T-cell (primary cell): ENCODE measurements at regions of chr9 and their contacts with region 1.

Region 1: GRCh38 chr9:33125871-33126822 is 41.0 kb downstream of the B4GALT1 start:
- DNase-seq: peak in 1 of 35 experiments; percentile 24
- ATAC-seq: no peak
- H3K4me3 ChIP-seq: no peak overlapping the region
- H3K4me3 Mint-ChIP-seq: no peak overlapping the region
- H3K27ac ChIP-seq: peak overlapping the region; percentile 16
- H3K27ac Mint-ChIP-seq: peak overlapping the region in 1 of 2 donors; percentile 47
- H3K4me1 ChIP-seq: peaks cover 0 to 45% of the 10 kb centered on the region in 2 experiments
- H3K4me1 Mint-ChIP-seq: peaks cover 36 to 69% (median 49%) of the 10 kb centered on the region in 3 donors
- H3K27me3 ChIP-seq: no peaks in the 10 kb centered on the region
- H3K27me3 Mint-ChIP-seq: no peaks in the 10 kb centered on the region

Region 2: GRCh38 chr9:33007755-33008154 is 118.4 kb before region 1 on chr9:
- CTCF ChIA-PET with region 1: no interaction called
- POLR2A ChIA-PET with region 1: no interaction called
- DNase-seq: no peak
- ATAC-seq: no peak
- H3K4me3 ChIP-seq: no peak overlapping the region
- H3K4me3 Mint-ChIP-seq: no peak overlapping the region
- H3K27ac ChIP-seq: no peak overlapping the region
- H3K27ac Mint-ChIP-seq: no peak overlapping the region
- H3K4me1 ChIP-seq: no peaks in the 10 kb centered on the region
- H3K4me1 Mint-ChIP-seq: peaks cover 0 to under 1% (median 0%) of the 10 kb centered on the region in 3 donors
- H3K27me3 ChIP-seq: no peaks in the 10 kb centered on the region
- H3K27me3 Mint-ChIP-seq: no peaks in the 10 kb centered on the region

Region 3: GRCh38 chr9:33109089-33109875 is 16.9 kb before region 1 on chr9:
- CTCF ChIA-PET with region 1: interaction called in 1 of 2 experiments, 5 read pairs
- POLR2A ChIA-PET with region 1: interaction called in 1 of 2 experiments, 13 read pairs
- DNase-seq: no peak
- ATAC-seq: no peak
- H3K4me3 ChIP-seq: no peak overlapping the region
- H3K4me3 Mint-ChIP-seq: no peak overlapping the region
- H3K27ac ChIP-seq: no peak overlapping the region
- H3K27ac Mint-ChIP-seq: peak overlapping the region; percentile 5 to 21
- H3K4me1 ChIP-seq: peaks cover 0 to 5% of the 10 kb centered on the region in 2 experiments
- H3K4me1 Mint-ChIP-seq: peaks cover 0 to 15% (median 9%) of the 10 kb centered on the region in 3 donors
- H3K27me3 ChIP-seq: no peaks in the 10 kb centered on the region
- H3K27me3 Mint-ChIP-seq: no peaks in the 10 kb centered on the region

Region 4: GRCh38 chr9:33159760-33160127 is 33.6 kb after region 1 on chr9:
- CTCF ChIA-PET with region 1: no interaction called
- POLR2A ChIA-PET with region 1: interaction called in 1 of 2 experiments, 11 read pairs
- DNase-seq: peak in 34 of 35 experiments; percentile 27 to 83 (median 68)
- ATAC-seq: peak; percentile 44 to 77 (median 49)
- H3K4me3 ChIP-seq: peak overlapping the region; percentile 28 to 42
- H3K4me3 Mint-ChIP-seq: peak overlapping the region; percentile 63 to 96 (median 76)
- H3K27ac ChIP-seq: peak overlapping the region; percentile 97
- H3K27ac Mint-ChIP-seq: peak overlapping the region; percentile 94 to 96
- H3K4me1 ChIP-seq: peaks cover 61 to 88% of the 10 kb centered on the region in 2 experiments
- H3K4me1 Mint-ChIP-seq: peaks cover 92 to 97% (median 93%) of the 10 kb centered on the region in 3 donors
- H3K27me3 ChIP-seq: no peaks in the 10 kb centered on the region
- H3K27me3 Mint-ChIP-seq: no peaks in the 10 kb centered on the region

Region 5: DNA sequence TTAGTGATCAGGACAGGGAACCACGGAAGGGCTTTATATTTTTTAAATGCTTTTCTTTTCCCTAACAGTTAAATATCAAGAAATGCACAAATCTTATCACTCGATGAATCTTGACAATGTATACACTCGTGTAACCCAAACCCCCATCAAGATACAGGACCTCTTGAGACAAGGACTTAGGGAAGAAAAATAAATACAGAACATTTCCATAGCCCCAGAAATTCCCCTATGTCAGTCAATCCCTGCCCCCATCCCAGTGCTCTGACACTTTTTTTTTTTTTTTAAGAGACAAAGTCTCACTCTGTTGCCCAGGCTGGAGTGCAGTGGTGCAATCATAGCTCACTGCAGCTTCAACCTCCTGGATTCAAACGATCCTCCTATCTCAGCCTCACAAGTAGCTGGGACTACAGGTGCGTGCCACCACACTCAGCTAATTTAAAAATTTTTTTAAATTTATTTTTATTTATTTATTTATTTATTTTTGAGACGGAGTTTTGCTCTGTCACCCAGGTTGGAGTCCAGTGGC is 116.5 kb after region 1 on chr9:
- CTCF ChIA-PET with region 1: no interaction called
- POLR2A ChIA-PET with region 1: interaction called in 1 of 2 experiments, 17 read pairs
- DNase-seq: no peak
- ATAC-seq: no peak
- H3K4me3 ChIP-seq: no peak overlapping the region
- H3K4me3 Mint-ChIP-seq: no peak overlapping the region
- H3K27ac ChIP-seq: no peak overlapping the region
- H3K27ac Mint-ChIP-seq: no peak overlapping the region
- H3K4me1 ChIP-seq: peaks cover 0 to 4% of the 10 kb centered on the region in 2 experiments
- H3K4me1 Mint-ChIP-seq: peaks cover 0 to 6% (median 3%) of the 10 kb centered on the region in 3 donors
- H3K27me3 ChIP-seq: peaks cover 0 to 10% of the 10 kb centered on the region in 2 experiments
- H3K27me3 Mint-ChIP-seq: no peaks in the 10 kb centered on the region

Region 6: DNA sequence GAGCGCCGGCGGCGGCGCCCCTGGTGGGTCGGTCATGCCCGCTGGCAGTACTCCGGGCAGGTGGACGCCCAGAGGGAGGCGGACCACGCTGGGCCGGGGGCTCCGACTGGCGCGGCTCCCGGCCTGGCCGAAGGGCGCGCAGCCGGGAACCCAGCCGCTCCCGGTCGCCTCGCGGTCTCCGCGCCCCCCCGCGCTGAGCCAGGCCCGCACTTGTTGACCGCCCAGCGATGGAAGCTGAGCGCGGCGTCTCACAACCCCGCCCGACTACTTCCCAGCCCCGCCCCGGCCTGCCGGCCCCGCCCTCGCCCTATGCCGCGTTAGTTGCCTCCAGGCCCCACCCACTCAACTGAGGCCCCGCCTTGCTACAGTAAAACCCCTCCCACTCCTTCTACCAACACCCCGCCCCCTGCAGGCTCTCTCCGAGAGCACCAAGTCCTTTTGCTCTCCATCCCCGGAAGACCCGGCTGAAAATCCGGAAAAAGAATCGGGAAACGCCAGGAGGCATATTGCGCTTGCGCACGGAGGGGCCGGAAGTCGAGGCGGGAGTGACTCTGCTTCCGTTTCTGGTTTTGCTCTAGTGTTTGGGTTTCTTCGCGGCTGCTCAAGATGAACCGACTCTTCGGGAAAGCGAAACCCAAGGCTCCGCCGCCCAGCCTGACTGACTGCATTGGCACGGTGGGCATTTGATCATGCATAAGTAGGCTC is 138.5 kb after region 1 on chr9 and contains the starts of genes BAG1 and CHMP5:
- CTCF ChIA-PET with region 1: no interaction called
- POLR2A ChIA-PET with region 1: no interaction called
- DNase-seq: peak; percentile 98 to 100 (median 99)
- ATAC-seq: peak; percentile 91 to 99 (median 95)
- H3K4me3 ChIP-seq: peak within 1 kb of the TSS; percentile 91 to 93
- H3K4me3 Mint-ChIP-seq: peak within 1 kb of the TSS; percentile 92 to 93 (median 93)
- H3K27ac ChIP-seq: peak within 1 kb of the TSS; percentile 88
- H3K27ac Mint-ChIP-seq: peak within 1 kb of the TSS; percentile 95 to 99
- H3K4me1 ChIP-seq: peaks cover 9 to 29% of the 10 kb centered on the region in 2 experiments
- H3K4me1 Mint-ChIP-seq: peaks cover 49 to 62% (median 52%) of the 10 kb centered on the region in 3 donors
- H3K27me3 ChIP-seq: no peaks in the 10 kb centered on the region
- H3K27me3 Mint-ChIP-seq: no peaks in the 10 kb centered on the region
- total RNA-seq, gene BAG1: 59.4 to 69.9 (median 62.4) TPM
- total RNA-seq, gene CHMP5: 20.5 to 32.1 (median 30.8) TPM